ENCODE measurements at regions of chr15 and their contacts with region 1.

Region 1: DNA sequence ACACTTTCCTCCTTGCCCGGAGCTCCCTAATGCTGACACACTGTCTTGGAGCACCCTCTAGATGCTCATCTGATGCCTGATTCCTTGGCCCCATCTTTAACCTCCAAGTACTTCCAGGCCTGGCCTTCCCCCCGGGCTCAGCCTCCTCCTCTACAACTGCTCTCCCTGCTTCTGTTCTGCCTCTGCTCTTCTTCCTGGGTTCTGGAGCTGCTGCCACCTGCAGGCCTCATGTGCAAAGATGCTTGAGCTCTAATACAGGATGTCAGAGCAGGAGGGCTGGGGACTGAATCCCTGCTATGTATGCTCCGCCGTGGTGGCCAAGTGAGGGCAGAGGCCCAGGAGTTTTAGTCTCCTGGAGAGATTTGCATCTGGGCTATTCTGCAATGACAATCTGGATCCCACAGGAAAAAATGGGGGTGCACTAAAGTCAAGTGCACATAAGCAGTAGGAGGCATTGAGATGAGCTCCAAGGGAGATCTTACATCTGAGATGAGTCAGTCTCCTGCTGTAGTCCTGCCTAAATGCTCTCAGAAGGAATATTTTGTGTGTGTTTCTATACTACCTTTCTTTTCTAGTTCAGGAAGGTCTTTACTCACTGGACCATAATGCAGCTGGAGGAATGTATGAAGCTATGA is 296.3 kb downstream of the UACA start:
- DNase-seq: peak in 4 of 5 donors; percentile 30 to 50 (median 46)
- H3K4me3 ChIP-seq: no peak overlapping the region
- H3K4me3 Mint-ChIP-seq: no peak overlapping the region
- H3K27ac ChIP-seq: no peak overlapping the region
- H3K27ac Mint-ChIP-seq: no peak overlapping the region
- H3K4me1 ChIP-seq: peaks cover 6% of the 10 kb centered on the region
- H3K4me1 Mint-ChIP-seq: peaks cover 4 to 5% (median 5%) of the 10 kb centered on the region in 4 donors
- H3K27me3 ChIP-seq: no peaks in the 10 kb centered on the region
- H3K27me3 Mint-ChIP-seq: peaks cover 0 to 8% of the 10 kb centered on the region in 2 donors

Region 2: GRCh38 chr15:69523010-69524001 is 943.7 kb before region 1 on chr15:
- CTCF ChIA-PET with region 1: interaction called, 10 read pairs
- POLR2A ChIA-PET with region 1: no interaction called
- intact Hi-C with region 1: no loop called
- DNase-seq: peak; percentile 38 to 63 (median 53)
- H3K4me3 ChIP-seq: no peak overlapping the region
- H3K4me3 Mint-ChIP-seq: no peak overlapping the region
- H3K27ac ChIP-seq: no peak overlapping the region
- H3K27ac Mint-ChIP-seq: peak overlapping the region in 1 of 7 donors; percentile 33
- H3K4me1 ChIP-seq: no peaks in the 10 kb centered on the region
- H3K4me1 Mint-ChIP-seq: no peaks in the 10 kb centered on the region
- H3K27me3 ChIP-seq: no peaks in the 10 kb centered on the region
- H3K27me3 Mint-ChIP-seq: peaks cover 3 to 5% of the 10 kb centered on the region in 2 donors

Region 3: GRCh38 chr15:70451821-70452653 is 15.0 kb before region 1 on chr15:
- CTCF ChIA-PET with region 1: interaction called, 20 read pairs
- POLR2A ChIA-PET with region 1: interaction called, 3 read pairs
- intact Hi-C with region 1: no loop called
- DNase-seq: peak in 3 of 5 donors; percentile 9 to 20 (median 13)
- H3K4me3 ChIP-seq: no peak overlapping the region
- H3K4me3 Mint-ChIP-seq: peak overlapping the region in 6 of 8 donors; percentile 29 to 66 (median 41)
- H3K27ac ChIP-seq: no peak overlapping the region
- H3K27ac Mint-ChIP-seq: no peak overlapping the region
- H3K4me1 ChIP-seq: peaks cover 40% of the 10 kb centered on the region
- H3K4me1 Mint-ChIP-seq: peaks cover 20 to 50% (median 30%) of the 10 kb centered on the region in 4 donors
- H3K27me3 ChIP-seq: no peaks in the 10 kb centered on the region
- H3K27me3 Mint-ChIP-seq: peaks cover 1 to 11% of the 10 kb centered on the region in 2 donors

Region 4: DNA sequence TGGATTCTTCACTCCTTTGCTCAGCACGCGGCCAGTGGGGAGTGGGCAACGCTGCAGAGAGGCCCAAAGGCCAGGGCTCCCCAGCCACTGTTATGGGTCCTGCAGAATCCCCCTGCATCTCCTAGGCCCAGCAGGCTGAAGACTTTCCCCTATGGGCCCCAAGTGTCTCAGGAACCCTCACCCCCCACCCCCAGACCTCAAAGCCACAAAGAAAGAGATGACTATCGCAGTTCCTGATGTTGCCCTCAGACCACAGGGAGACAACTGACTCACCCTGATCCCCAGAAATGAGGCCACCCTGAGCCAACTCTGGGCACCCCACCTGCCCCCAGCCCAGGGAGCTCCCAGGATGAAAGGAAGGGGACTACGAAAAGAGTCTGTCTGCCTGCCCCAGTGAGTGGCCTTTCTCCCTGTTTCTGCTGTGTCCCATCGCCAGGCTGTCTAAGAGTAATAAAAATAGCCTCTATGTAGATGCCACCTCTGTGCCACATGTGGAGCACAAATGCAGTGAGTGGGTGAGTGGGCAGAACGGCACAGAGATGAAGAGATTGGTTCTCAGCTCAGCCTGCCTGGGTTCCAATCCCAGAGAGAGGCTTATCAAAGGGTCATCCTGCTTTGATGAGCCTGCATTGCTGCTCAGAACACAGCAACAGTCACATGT is 13.3 kb after region 1 on chr15:
- CTCF ChIA-PET with region 1: interaction called, 109 read pairs
- POLR2A ChIA-PET with region 1: interaction called, 3 read pairs
- intact Hi-C with region 1: no loop called
- DNase-seq: peak; percentile 61 to 87 (median 62)
- H3K4me3 ChIP-seq: peak overlapping the region in 1 of 2 donors; percentile 8
- H3K4me3 Mint-ChIP-seq: peak overlapping the region; percentile 47 to 82 (median 67)
- H3K27ac ChIP-seq: no peak overlapping the region
- H3K27ac Mint-ChIP-seq: peak overlapping the region in 6 of 7 donors; percentile 36 to 82 (median 64)
- H3K4me1 ChIP-seq: peaks cover 37% of the 10 kb centered on the region
- H3K4me1 Mint-ChIP-seq: peaks cover 24 to 65% (median 34%) of the 10 kb centered on the region in 4 donors
- H3K27me3 ChIP-seq: no peaks in the 10 kb centered on the region
- H3K27me3 Mint-ChIP-seq: peaks cover 10 to 12% of the 10 kb centered on the region in 2 donors

Region 5: DNA sequence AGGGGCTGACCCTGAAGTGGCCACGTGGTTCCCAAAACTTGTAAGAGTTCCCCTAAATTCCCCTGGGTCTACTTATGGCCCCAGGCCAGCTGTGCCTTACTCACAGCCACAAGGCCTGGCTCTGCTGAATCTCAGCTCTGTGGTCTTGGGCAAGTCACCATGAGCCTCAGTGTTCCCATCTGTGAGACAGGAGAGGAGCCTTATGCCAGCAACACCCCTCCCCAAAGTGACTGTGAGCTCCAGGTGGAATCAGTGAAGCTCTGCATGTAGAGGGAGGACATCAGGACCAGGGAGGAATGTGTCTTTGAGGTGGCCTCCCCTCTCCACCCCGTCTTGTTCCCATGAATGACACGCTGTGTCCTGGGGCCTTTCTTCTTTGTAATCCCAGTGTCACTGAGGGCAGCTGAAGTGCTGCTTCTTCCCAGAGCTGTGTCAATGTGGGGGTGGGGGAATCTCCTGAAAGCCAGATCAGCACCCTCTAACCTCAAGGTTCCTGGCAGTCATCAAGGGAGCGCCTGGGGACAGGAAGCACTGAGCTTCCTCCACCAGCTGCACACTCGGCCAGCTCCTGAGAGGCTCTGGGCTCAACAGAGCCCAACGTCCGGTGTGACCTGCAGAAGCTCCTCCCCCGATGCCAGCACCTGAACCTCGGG is 37.4 kb after region 1 on chr15:
- CTCF ChIA-PET with region 1: interaction called, 26 read pairs
- POLR2A ChIA-PET with region 1: no interaction called
- intact Hi-C with region 1: no loop called
- DNase-seq: no peak
- H3K4me3 ChIP-seq: peak overlapping the region in 1 of 2 donors; percentile 2
- H3K4me3 Mint-ChIP-seq: peak overlapping the region in 7 of 8 donors; percentile 54 to 76 (median 59)
- H3K27ac ChIP-seq: no peak overlapping the region
- H3K27ac Mint-ChIP-seq: peak overlapping the region in 1 of 7 donors; percentile 8
- H3K4me1 ChIP-seq: peaks cover 62% of the 10 kb centered on the region
- H3K4me1 Mint-ChIP-seq: peaks cover 36 to 68% (median 51%) of the 10 kb centered on the region in 4 donors
- H3K27me3 ChIP-seq: no peaks in the 10 kb centered on the region
- H3K27me3 Mint-ChIP-seq: no peaks in the 10 kb centered on the region

Region 6: DNA sequence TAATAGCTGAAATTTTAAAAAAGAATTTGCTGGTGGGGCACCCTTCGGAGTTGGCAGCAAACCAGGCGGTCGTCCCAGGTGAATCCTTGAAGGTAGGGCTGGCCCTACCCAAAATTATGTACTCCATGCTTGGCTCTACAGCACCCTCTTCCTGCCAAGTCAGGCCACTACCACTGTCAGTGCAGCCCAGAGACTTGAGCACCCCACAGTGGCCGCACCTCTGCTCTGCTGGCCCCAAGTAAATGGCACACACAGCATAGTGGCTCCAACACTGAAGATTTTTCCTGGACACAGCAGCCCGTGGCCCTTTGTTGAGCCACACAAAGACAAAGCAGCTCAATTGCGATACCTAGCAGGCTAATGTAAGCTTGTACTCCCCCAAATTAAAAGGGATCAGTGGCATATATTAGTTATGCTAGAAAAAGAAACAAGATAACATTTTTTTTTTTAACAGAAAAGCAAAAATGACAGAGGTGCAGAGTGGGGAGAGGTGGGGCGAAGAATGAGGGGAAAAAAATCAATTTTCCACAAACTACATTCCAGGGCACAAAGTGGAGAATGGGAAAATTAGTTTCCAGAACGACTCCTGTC is 45.9 kb after region 1 on chr15:
- CTCF ChIA-PET with region 1: interaction called, 17 read pairs
- POLR2A ChIA-PET with region 1: no interaction called
- intact Hi-C with region 1: no loop called
- DNase-seq: peak; percentile 55 to 67 (median 59)
- H3K4me3 ChIP-seq: no peak overlapping the region
- H3K4me3 Mint-ChIP-seq: no peak overlapping the region
- H3K27ac ChIP-seq: no peak overlapping the region
- H3K27ac Mint-ChIP-seq: peak overlapping the region in 1 of 7 donors; percentile 43
- H3K4me1 ChIP-seq: peaks cover 20% of the 10 kb centered on the region
- H3K4me1 Mint-ChIP-seq: peaks cover 9 to 28% (median 18%) of the 10 kb centered on the region in 4 donors
- H3K27me3 ChIP-seq: no peaks in the 10 kb centered on the region
- H3K27me3 Mint-ChIP-seq: no peaks in the 10 kb centered on the region